ENCODE measurements at regions of chr5 and their contacts with region 1.

Region 1: DNA sequence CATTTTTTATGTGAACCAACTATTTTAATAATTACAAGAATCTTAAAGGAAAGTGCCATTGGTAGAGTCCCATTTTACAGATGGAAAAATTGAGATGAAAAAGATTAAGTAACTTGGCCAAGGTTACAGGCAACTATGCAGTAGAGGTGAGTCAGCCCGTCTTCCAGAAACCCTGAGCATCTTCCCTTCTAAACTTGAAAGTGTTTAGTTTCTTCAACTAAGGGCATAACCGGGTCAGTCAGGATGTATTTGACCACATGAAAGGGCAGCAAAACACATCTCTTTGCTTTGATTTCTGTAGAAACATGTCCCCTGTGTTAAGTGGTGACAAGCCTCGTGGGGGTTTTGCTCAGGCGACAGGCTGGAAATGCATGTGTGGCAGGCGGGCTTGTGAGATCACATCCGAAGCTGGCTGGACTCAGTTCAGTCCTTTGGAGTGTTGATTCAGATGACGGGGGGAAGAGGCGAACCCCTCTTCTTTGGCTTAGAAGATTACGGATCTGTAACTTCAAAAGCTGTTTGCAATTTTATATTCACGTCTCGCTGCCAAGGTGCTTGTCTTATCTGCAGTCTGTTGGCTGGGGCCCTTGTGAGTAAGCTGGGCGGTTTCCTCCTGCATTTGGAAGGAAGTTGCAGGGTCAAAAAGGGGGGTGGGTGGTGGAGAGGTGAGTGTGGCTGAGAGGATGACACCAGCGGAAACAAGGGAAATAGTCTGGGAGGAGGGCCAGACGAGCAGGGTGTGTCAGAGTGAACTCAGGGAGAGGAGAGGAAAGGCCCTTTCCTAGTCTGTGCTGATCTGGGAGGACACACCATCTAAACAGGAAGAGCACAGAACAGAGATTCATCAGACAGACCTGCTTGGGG is 78.9 kb upstream of the RPS23 start:
- DNase-seq: peak; percentile 99
- H3K4me3 Mint-ChIP-seq: peak overlapping the region; percentile 55
- H3K27ac Mint-ChIP-seq: peak overlapping the region; percentile 84
- H3K4me1 Mint-ChIP-seq: peaks cover 49% of the 10 kb centered on the region
- H3K27me3 Mint-ChIP-seq: no peaks in the 10 kb centered on the region
- CTCF ChIP-seq: no peak

Region 2: DNA sequence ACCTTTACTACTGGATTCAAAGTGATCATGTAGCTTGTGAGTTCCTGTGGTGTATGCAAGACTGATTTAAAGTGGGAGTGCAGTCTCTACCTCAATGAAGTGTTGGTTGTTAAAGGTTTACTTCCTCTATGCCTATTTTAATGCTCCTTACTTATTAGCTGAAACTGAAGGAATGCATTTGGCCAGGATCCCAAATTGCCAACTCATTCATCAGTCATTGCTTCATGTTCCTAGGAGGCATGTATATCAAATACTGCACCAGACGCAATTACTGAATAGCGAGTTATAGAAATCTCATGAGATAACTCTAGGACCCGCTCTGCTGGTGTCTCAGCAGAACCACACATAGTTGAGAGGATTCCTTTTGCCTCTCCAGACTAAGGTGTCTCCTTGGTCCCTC is 64.1 kb after region 1 on chr5:
- CTCF ChIA-PET with region 1: interaction called, 9 read pairs
- POLR2A ChIA-PET with region 1: interaction called, 13 read pairs
- intact Hi-C with region 1: loop called (anchors 1 kb)
- DNase-seq: peak; percentile 99
- H3K4me3 Mint-ChIP-seq: no peak overlapping the region
- H3K27ac Mint-ChIP-seq: no peak overlapping the region
- H3K4me1 Mint-ChIP-seq: peaks cover 51% of the 10 kb centered on the region
- H3K27me3 Mint-ChIP-seq: no peaks in the 10 kb centered on the region
- CTCF ChIP-seq: peak; percentile 49

Region 3: GRCh38 chr5:82635561-82636288 is 278.7 kb after region 1 on chr5:
- CTCF ChIA-PET with region 1: no interaction called
- POLR2A ChIA-PET with region 1: no interaction called
- intact Hi-C with region 1: loop called (anchors 2 kb)
- DNase-seq: peak; percentile 8
- H3K4me3 Mint-ChIP-seq: no peak overlapping the region
- H3K27ac Mint-ChIP-seq: no peak overlapping the region
- H3K4me1 Mint-ChIP-seq: peaks cover 6% of the 10 kb centered on the region
- H3K27me3 Mint-ChIP-seq: no peaks in the 10 kb centered on the region
- CTCF ChIP-seq: no peak

Region 4: DNA sequence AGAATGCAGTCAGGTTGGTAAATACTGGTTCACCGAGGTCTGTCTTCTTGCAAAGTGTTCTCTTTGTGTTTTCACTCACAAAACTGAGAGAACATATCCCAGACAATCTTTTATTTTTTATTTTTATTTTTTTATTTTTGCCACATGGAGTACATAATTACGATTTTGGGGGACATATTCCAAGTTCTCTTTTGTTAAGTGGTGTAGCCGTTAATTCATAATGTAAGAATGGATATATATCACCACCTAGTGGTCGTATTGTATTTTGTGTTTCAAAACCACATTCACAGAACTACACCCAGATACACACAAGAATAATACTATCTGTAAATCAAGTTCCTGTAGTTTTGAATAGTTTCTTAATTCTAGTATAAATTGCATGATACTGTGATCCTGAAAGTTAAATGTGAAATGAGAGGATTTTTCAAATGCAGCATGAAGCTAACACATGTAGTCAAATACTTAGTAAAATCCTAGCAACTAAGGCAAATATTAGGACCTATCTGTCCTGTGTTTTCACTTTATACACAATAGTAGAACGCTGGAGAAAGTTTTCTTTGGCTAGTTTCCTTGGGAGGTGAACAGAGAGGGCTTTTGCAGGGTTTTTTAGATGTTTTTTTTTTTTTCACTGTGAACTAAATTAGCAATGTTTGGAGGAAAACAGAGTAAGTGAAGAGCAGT is 1207.2 kb after region 1 on chr5:
- CTCF ChIA-PET with region 1: interaction called, 45 read pairs
- POLR2A ChIA-PET with region 1: no interaction called
- intact Hi-C with region 1: loop called (anchors 2 kb)
- DNase-seq: peak; percentile 58
- H3K4me3 Mint-ChIP-seq: no peak overlapping the region
- H3K27ac Mint-ChIP-seq: no peak overlapping the region
- H3K4me1 Mint-ChIP-seq: peaks cover 27% of the 10 kb centered on the region
- H3K27me3 Mint-ChIP-seq: no peaks in the 10 kb centered on the region
- CTCF ChIP-seq: peak; percentile 51

Measured in MCF 10A (cell line).